ENCODE measurements at regions of chr2 and their contacts with region 1.

Region 1: DNA sequence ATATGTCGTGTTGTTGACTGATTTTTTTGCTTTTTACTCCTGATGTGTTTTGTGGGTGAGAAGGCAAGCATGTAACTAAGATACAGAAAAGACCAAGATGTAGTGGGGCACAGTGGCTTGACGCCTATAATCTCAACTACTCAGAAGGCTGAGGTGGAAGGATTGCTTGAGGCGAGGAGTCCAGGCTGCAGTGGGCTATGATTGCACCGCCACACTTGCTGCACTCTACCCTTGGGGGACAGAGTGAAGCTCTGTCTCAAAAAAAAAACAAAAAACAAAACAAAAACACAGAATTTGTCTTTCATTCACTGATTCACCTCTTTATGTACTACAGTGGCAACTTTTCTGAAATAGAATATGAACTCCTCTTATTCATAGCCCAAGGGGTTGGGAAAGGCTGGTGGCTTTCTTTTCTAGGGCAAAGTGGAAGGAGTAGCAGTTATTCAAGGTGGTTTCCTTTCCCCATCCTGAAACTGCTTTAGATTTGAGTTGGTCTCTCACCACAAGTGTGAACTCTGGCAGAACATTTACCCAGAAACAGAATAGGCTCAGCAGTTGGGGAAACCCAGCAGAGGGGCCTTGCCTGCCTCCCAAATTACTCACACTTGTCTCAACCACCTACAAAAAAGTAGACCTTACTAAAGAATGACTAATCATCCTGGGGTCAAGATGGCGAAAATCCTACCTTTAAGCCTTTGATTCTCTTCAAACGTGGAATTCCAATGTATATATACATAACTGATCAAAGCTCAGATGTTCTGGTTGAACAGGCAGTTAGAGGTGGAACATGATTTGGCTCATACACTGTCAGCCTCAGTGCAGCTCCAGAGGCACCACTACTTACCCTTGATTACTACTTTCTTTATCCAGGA is 6.5 kb downstream of the TANK start:
- DNase-seq: peak; percentile 88
- H3K4me3 Mint-ChIP-seq: no peak overlapping the region
- H3K27ac Mint-ChIP-seq: peak overlapping the region; percentile 74
- H3K4me1 Mint-ChIP-seq: peaks cover 88% of the 10 kb centered on the region
- H3K27me3 Mint-ChIP-seq: no peaks in the 10 kb centered on the region

Region 2: DNA sequence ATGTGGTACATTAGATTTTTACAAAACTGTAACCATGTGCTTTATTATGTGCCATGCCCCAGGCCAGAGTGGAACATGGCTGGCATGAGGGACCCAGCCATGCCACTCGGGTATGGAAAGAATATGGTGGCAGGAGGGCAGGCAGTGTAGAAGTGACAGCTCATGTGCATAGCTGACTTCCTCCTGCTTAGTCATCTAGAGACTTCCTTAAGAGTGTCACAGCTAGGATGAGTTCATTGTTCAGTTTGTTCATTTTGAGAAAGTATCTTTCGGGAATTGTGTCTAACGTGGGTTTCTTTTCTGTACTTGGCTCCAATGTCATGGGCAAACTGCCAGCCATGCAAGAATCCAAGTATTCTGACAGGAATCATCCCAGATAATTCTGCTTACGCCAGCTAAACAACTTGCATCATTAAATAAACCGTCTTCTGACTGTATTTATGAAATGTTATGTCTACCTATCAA is 872.4 kb before region 1 on chr2:
- CTCF ChIA-PET with region 1: no interaction called
- intact Hi-C with region 1: loop called (anchors 2 kb)
- DNase-seq: peak; percentile 59
- H3K4me3 Mint-ChIP-seq: no peak overlapping the region
- H3K27ac Mint-ChIP-seq: peak overlapping the region; percentile 67
- H3K4me1 Mint-ChIP-seq: peaks cover 80% of the 10 kb centered on the region
- H3K27me3 Mint-ChIP-seq: no peaks in the 10 kb centered on the region

Region 3: GRCh38 chr2:161044095-161044865 is 122.5 kb before region 1 on chr2:
- CTCF ChIA-PET with region 1: no interaction called
- intact Hi-C with region 1: no loop called
- DNase-seq: no peak
- H3K4me3 Mint-ChIP-seq: no peak overlapping the region
- H3K27ac Mint-ChIP-seq: no peak overlapping the region
- H3K4me1 Mint-ChIP-seq: no peaks in the 10 kb centered on the region
- H3K27me3 Mint-ChIP-seq: peaks cover 5% of the 10 kb centered on the region

Region 4: GRCh38 chr2:161104054-161104553 is 62.7 kb before region 1 on chr2:
- CTCF ChIA-PET with region 1: no interaction called
- intact Hi-C with region 1: loop called (anchors 1 kb)
- DNase-seq: peak; percentile 35
- H3K4me3 Mint-ChIP-seq: no peak overlapping the region
- H3K27ac Mint-ChIP-seq: peak overlapping the region; percentile 54
- H3K4me1 Mint-ChIP-seq: peaks cover 34% of the 10 kb centered on the region
- H3K27me3 Mint-ChIP-seq: peaks cover 3% of the 10 kb centered on the region

Region 5: GRCh38 chr2:161136696-161137324 is 30.0 kb before region 1 on chr2:
- CTCF ChIA-PET with region 1: no interaction called
- intact Hi-C with region 1: loop called (anchors 1 kb)
- DNase-seq: peak; percentile 48
- H3K4me3 Mint-ChIP-seq: peak overlapping the region; percentile 88
- H3K27ac Mint-ChIP-seq: peak overlapping the region; percentile 98
- H3K4me1 Mint-ChIP-seq: peaks cover 49% of the 10 kb centered on the region
- H3K27me3 Mint-ChIP-seq: no peaks in the 10 kb centered on the region

Region 6: DNA sequence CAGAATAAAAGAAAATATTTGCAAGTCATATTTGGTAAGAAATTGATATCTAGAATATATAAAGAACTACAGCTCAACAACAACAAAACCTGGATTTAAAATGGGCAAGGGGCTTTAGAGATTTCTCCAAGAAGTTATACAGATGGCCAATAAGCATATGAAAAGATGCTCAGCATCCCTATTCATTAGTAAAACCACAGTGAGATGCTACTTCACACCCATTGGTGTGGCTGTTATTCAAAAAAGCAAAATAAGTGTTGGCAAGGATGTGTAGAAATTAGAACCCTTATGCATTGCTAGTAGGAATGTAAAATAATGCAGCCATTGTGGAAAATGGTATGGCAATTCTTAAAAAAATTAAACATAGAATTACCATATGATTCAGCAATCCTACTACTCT is 23.3 kb after region 1 on chr2:
- CTCF ChIA-PET with region 1: no interaction called
- intact Hi-C with region 1: no loop called
- DNase-seq: no peak
- H3K4me3 Mint-ChIP-seq: no peak overlapping the region
- H3K27ac Mint-ChIP-seq: no peak overlapping the region
- H3K4me1 Mint-ChIP-seq: peaks cover 12% of the 10 kb centered on the region
- H3K27me3 Mint-ChIP-seq: no peaks in the 10 kb centered on the region

Region 7: GRCh38 chr2:161905389-161906046 is 738.7 kb after region 1 on chr2:
- CTCF ChIA-PET with region 1: no interaction called
- intact Hi-C with region 1: loop called (anchors 2 kb)
- DNase-seq: peak; percentile 50
- H3K4me3 Mint-ChIP-seq: no peak overlapping the region
- H3K27ac Mint-ChIP-seq: peak overlapping the region; percentile 57
- H3K4me1 Mint-ChIP-seq: peaks cover 6% of the 10 kb centered on the region
- H3K27me3 Mint-ChIP-seq: no peaks in the 10 kb centered on the region